ENCODE measurements at regions of chr3 and their contacts with region 1.

Region 1: DNA sequence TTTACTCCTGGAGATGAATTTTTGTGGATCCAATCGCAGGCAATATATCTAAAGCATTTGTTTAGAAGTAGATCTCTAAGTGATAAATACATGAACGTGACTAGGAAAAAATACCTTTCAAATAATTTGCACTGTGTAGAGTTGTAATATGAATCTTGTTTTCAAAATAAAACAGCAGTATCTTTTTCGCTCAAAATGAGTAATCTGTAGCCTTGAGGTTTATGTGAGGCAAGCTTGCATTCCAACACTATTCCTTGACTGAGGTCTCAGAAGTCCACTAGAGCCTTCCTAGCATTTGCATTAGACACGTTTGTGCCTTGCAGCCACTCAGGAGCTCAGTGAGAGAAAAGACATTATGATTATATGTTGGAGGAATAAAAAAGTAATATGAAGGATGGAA is 138.3 kb upstream of the ROBO1 start:
- DNase-seq: no peak
- ATAC-seq: no peak
- H3K4me3 ChIP-seq: no peak overlapping the region
- H3K4me3 Mint-ChIP-seq: no peak overlapping the region
- H3K27ac ChIP-seq: no peak overlapping the region
- H3K27ac Mint-ChIP-seq: no peak overlapping the region
- H3K4me1 ChIP-seq: no peaks in the 10 kb centered on the region
- H3K4me1 Mint-ChIP-seq: no peaks in the 10 kb centered on the region
- H3K27me3 ChIP-seq: no peaks in the 10 kb centered on the region
- H3K27me3 Mint-ChIP-seq: no peaks in the 10 kb centered on the region

Region 2: GRCh38 chr3:79947469-79947868 is 41.4 kb after region 1 on chr3:
- CTCF ChIA-PET with region 1: no interaction called
- POLR2A ChIA-PET with region 1: no interaction called
- intact Hi-C with region 1: loop called in 1 of 2 experiments (anchors 1 kb)
- DNase-seq: no peak
- ATAC-seq: no peak
- H3K4me3 ChIP-seq: no peak overlapping the region
- H3K4me3 Mint-ChIP-seq: no peak overlapping the region
- H3K27ac ChIP-seq: no peak overlapping the region
- H3K27ac Mint-ChIP-seq: no peak overlapping the region
- H3K4me1 ChIP-seq: no peaks in the 10 kb centered on the region
- H3K4me1 Mint-ChIP-seq: no peaks in the 10 kb centered on the region
- H3K27me3 ChIP-seq: no peaks in the 10 kb centered on the region
- H3K27me3 Mint-ChIP-seq: no peaks in the 10 kb centered on the region

Region 3: DNA sequence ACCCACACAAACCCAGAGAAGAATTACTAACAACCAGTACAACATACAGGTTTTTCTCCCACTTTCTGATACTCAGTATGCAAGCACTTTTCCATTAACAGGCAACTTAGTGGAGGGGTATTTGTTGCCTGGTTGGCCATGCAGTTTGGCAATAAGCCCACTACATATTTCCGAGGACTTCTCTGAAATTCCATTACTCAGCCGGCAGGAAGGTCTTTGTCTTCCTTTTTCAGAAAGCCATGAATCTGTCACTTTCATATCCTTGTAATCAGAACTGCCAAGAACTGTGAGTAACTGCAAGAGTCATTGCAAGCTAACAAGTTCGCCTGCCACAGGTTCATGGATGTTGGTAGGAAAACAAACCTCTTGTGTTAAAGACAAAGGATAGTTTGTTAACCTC is 283.9 kb after region 1 on chr3:
- CTCF ChIA-PET with region 1: no interaction called
- POLR2A ChIA-PET with region 1: no interaction called
- intact Hi-C with region 1: no loop called
- DNase-seq: no peak
- ATAC-seq: no peak
- H3K4me3 ChIP-seq: no peak overlapping the region
- H3K4me3 Mint-ChIP-seq: no peak overlapping the region
- H3K27ac ChIP-seq: no peak overlapping the region
- H3K27ac Mint-ChIP-seq: no peak overlapping the region
- H3K4me1 ChIP-seq: no peaks in the 10 kb centered on the region
- H3K4me1 Mint-ChIP-seq: no peaks in the 10 kb centered on the region
- H3K27me3 ChIP-seq: no peaks in the 10 kb centered on the region
- H3K27me3 Mint-ChIP-seq: no peaks in the 10 kb centered on the region

Region 4: DNA sequence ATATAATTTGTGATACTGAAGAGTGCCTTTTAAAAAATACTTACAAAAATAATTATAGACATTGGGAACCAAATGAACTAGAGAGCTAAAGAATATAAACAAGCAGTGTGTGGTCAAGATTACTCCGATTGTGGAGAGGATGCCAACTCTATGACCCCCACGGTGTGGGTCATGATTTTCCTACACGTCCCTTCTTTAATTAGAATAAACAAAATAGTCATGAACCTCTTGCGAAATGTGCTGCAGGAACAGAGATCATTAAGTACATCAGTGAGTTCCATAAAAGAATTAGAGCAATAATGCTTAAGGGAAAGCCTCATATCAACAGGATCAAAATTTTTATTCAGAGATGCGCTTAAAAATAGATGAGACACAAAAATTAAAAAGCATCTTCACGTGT is 338.3 kb after region 1 on chr3:
- CTCF ChIA-PET with region 1: no interaction called
- POLR2A ChIA-PET with region 1: no interaction called
- intact Hi-C with region 1: no loop called
- DNase-seq: no peak
- ATAC-seq: no peak
- H3K4me3 ChIP-seq: no peak overlapping the region
- H3K4me3 Mint-ChIP-seq: no peak overlapping the region
- H3K27ac ChIP-seq: no peak overlapping the region
- H3K27ac Mint-ChIP-seq: no peak overlapping the region
- H3K4me1 ChIP-seq: no peaks in the 10 kb centered on the region
- H3K4me1 Mint-ChIP-seq: no peaks in the 10 kb centered on the region
- H3K27me3 ChIP-seq: no peaks in the 10 kb centered on the region
- H3K27me3 Mint-ChIP-seq: no peaks in the 10 kb centered on the region

Measured in naive thymus-derived CD4-positive, alpha-beta T cell (primary cell).